BJ (cell line): ENCODE measurements at regions of chr6 and their contacts with region 1.

Region 1: GRCh38 chr6:110039364-110039980 is 61.4 kb downstream of the GPR6 start:
- DNase-seq: peak; percentile 46
- H3K4me3 ChIP-seq: peak overlapping the region; percentile 36
- H3K27me3 ChIP-seq: 0 out of 2 replicates have a peak, but pooled peaks cover 2% of the 10 kb centered on the region
- CTCF ChIP-seq: peak; percentile 93

Region 2: GRCh38 chr6:109526905-109527628 is 512.4 kb before region 1 on chr6:
- CTCF ChIA-PET with region 1: interaction called, 20 read pairs
- POLR2A ChIA-PET with region 1: no interaction called
- DNase-seq: no peak
- H3K4me3 ChIP-seq: no peak overlapping the region
- H3K27me3 ChIP-seq: no peaks in the 10 kb centered on the region
- CTCF ChIP-seq: peak; percentile 65

Region 3: DNA sequence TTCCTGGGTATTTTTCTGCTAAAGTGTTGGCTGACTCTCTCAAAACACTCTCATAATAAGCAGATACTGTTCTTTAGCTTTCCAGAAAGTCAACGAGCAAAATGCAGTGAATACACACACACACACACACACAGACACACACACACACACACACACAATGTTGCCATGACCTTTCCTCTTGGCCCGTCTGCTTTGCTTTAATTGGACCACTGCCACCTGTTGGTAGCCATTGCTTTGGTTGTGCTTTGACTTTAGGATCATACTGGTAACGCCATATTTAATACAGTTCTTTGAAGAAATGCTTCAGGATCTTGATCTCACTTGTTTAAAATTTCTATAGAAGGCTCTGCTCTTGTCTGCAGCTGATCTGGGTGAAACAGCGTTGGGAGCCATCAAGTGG is 344.0 kb before region 1 on chr6:
- CTCF ChIA-PET with region 1: interaction called, 314 read pairs
- POLR2A ChIA-PET with region 1: no interaction called
- DNase-seq: no peak
- H3K4me3 ChIP-seq: no peak overlapping the region
- H3K27me3 ChIP-seq: no peaks in the 10 kb centered on the region
- CTCF ChIP-seq: no peak

Region 4: GRCh38 chr6:109713097-109713496 is 326.4 kb before region 1 on chr6:
- CTCF ChIA-PET with region 1: interaction called, 73 read pairs
- POLR2A ChIA-PET with region 1: no interaction called
- DNase-seq: no peak
- H3K4me3 ChIP-seq: no peak overlapping the region
- H3K27me3 ChIP-seq: no peaks in the 10 kb centered on the region
- CTCF ChIP-seq: no peak

Region 5: GRCh38 chr6:110053395-110054240 is 14.1 kb after region 1 on chr6:
- CTCF ChIA-PET with region 1: interaction called, 21 read pairs
- POLR2A ChIA-PET with region 1: no interaction called
- DNase-seq: no peak
- H3K4me3 ChIP-seq: no peak overlapping the region
- H3K27me3 ChIP-seq: peaks cover 6% of the 10 kb centered on the region
- CTCF ChIP-seq: peak; percentile 80

Region 6: GRCh38 chr6:110389689-110390382 is 350.4 kb after region 1 on chr6:
- CTCF ChIA-PET with region 1: interaction called, 50 read pairs
- POLR2A ChIA-PET with region 1: no interaction called
- DNase-seq: no peak
- H3K4me3 ChIP-seq: no peak overlapping the region
- H3K27me3 ChIP-seq: no peaks in the 10 kb centered on the region; the same call in 1 of the 2 replicates
- CTCF ChIP-seq: no peak